BJ (cell line): ENCODE measurements at regions of chr6 and their contacts with region 1.

Region 1: GRCh38 chr6:73732845-73733675 is 37.1 kb downstream of the CD109 start:
- DNase-seq: no peak
- H3K4me3 ChIP-seq: no peak overlapping the region
- H3K27me3 ChIP-seq: no peaks in the 10 kb centered on the region
- CTCF ChIP-seq: peak; percentile 93

Region 2: GRCh38 chr6:73520688-73521350 is 212.2 kb before region 1 on chr6 and contains the start of gene EEF1A1:
- CTCF ChIA-PET with region 1: no interaction called
- POLR2A ChIA-PET with region 1: no interaction called
- DNase-seq: peak; percentile 96
- H3K4me3 ChIP-seq: peak within 1 kb of the TSS; percentile 96
- H3K27me3 ChIP-seq: no peaks in the 10 kb centered on the region
- CTCF ChIP-seq: no peak
- polyA plus RNA-seq, gene EEF1A1: 20,981 and 25,088 TPM in 2 replicates

Region 3: GRCh38 chr6:73566954-73567591 is 166.0 kb before region 1 on chr6:
- CTCF ChIA-PET with region 1: no interaction called
- POLR2A ChIA-PET with region 1: no interaction called
- DNase-seq: peak; percentile 9
- H3K4me3 ChIP-seq: no peak overlapping the region
- H3K27me3 ChIP-seq: no peaks in the 10 kb centered on the region
- CTCF ChIP-seq: no peak

Region 4: GRCh38 chr6:73653571-73654424 is 79.3 kb before region 1 on chr6 and contains the start of gene SLC17A5:
- CTCF ChIA-PET with region 1: interaction called, 11 read pairs
- POLR2A ChIA-PET with region 1: no interaction called
- DNase-seq: peak; percentile 61
- H3K4me3 ChIP-seq: peak within 1 kb of the TSS; percentile 100
- H3K27me3 ChIP-seq: no peaks in the 10 kb centered on the region
- CTCF ChIP-seq: no peak
- polyA plus RNA-seq, gene SLC17A5: 13.2 and 21.2 TPM in 2 replicates

Region 5: GRCh38 chr6:73675466-73676098 is 57.5 kb before region 1 on chr6:
- CTCF ChIA-PET with region 1: interaction called, 169 read pairs
- POLR2A ChIA-PET with region 1: no interaction called
- DNase-seq: no peak
- H3K4me3 ChIP-seq: no peak overlapping the region
- H3K27me3 ChIP-seq: peaks cover 2% of the 10 kb centered on the region; the same call in 1 of the 2 replicates
- CTCF ChIP-seq: peak; percentile 87

Region 6: DNA sequence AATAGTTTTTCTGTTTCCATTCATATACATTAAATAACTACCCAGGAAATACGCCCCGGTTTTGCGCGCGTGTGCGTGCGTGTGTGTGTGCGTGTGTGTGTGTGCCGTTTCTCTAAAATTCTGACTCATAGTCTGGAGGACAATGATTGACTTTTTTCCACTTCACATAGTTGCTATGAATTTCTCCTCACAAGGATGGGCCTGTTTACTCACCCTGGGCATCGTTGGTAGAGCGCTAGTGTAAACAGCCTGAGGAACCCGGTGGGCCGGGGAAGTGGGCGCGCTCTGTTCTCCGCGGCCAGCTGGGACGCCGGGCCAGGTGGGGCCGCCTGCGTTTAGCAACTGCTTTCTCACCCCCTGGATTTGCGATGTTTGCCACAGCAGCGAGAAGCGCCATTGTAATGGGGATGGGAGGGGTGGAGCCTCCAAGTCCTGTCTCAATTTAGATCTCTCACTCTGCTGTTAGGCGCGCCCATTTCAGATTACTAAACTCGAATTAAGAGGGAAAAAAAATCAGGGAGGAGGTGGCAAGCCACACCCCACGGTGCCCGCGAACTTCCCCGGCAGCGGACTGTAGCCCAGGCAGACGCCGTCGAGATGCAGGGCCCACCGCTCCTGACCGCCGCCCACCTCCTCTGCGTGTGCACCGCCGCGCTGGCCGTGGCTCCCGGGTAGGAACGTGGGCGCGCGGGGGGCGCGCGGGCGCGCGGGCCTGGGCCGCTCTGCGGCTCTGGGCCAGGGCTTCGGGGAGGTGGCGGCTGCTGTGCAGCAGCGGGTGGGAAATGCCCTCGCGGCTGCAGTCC is 37.2 kb before region 1 on chr6 and contains the start of gene CD109:
- CTCF ChIA-PET with region 1: interaction called, 26 read pairs
- POLR2A ChIA-PET with region 1: no interaction called
- DNase-seq: no peak
- H3K4me3 ChIP-seq: peak within 1 kb of the TSS; percentile 54
- H3K27me3 ChIP-seq: no peaks in the 10 kb centered on the region
- CTCF ChIP-seq: no peak
- polyA plus RNA-seq, gene CD109: 14.7 and 29.4 TPM in 2 replicates